ENCODE measurements at regions of chr12 and their contacts with region 1.

Region 1: DNA sequence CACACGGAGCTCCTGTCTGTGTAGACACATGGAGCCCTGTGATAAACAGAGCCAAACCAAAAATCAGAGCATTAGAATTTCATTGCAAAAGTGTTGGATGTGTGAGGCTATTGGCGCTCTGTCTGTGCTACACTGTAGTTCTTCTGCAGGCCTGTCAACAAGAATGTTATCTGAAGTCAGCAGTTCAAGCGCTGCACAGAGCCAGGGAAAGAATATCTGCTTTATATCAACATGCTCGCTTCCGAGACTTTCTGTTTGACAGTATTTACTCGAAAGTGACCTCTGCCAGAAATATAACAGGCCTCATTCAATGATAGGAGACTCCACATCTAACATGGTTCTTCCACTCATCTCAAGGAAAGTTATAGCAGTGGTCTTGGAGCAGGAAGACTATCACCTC is 118.3 kb downstream of the CCER1 start:
- DNase-seq: peak in 1 of 2 donors; percentile 58
- ATAC-seq: peak; percentile 93 to 100 (median 98)
- H3K4me3 ChIP-seq: no peak overlapping the region
- H3K27ac ChIP-seq: peak overlapping the region in 3 of 10 donors; percentile 18 to 35 (median 18)
- H3K4me1 ChIP-seq: peaks cover 0 to 4% (median 2%) of the 10 kb centered on the region in 9 donors
- H3K27me3 ChIP-seq: no peaks in the 10 kb centered on the region
- CTCF ChIP-seq: no peak

Region 2: GRCh38 chr12:90484094-90484493 is 352.6 kb before region 1 on chr12:
- intact Hi-C with region 1: loop called in 1 of 10 experiments (anchors 5 kb)
- DNase-seq: no peak
- ATAC-seq: peak in 1 of 8 donors; percentile 44
- H3K4me3 ChIP-seq: no peak overlapping the region
- H3K27ac ChIP-seq: no peak overlapping the region
- H3K4me1 ChIP-seq: no peaks in the 10 kb centered on the region
- H3K27me3 ChIP-seq: no peaks in the 10 kb centered on the region
- CTCF ChIP-seq: no peak

Region 3: GRCh38 chr12:90801776-90802175 is 34.9 kb before region 1 on chr12:
- intact Hi-C with region 1: no loop called
- DNase-seq: no peak
- ATAC-seq: no peak
- H3K4me3 ChIP-seq: no peak overlapping the region
- H3K27ac ChIP-seq: no peak overlapping the region
- H3K4me1 ChIP-seq: no peaks in the 10 kb centered on the region
- H3K27me3 ChIP-seq: no peaks in the 10 kb centered on the region
- CTCF ChIP-seq: no peak